ENCODE measurements at regions of chr2 and their contacts with region 1.

Region 1: DNA sequence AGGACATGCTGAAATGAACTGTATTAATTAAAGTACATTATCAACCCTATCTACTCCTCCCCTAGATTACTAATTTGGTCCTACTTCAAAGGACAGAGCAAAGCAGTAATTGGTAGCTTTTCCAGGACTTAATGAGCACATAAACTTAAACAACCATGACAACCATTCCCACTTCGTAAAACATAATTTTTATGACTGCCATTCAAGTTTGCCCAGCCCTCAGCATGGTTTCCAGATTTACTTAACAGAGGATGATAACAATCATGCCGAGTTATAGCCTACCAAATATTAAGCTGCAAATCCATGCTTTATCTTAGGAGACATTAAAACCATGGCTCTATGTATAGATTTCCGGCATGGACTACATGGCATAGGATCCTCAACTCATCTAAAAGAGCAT is 401.1 kb upstream of the CHAC2 start:
- DNase-seq: no peak
- ATAC-seq: no peak
- H3K4me3 ChIP-seq: no peak overlapping the region
- H3K27ac ChIP-seq: no peak overlapping the region
- H3K4me1 ChIP-seq: no peaks in the 10 kb centered on the region
- H3K27me3 ChIP-seq: no peaks in the 10 kb centered on the region
- CTCF ChIP-seq: no peak
- EP300 ChIP-seq: no peak
- POLR2A ChIP-seq: no peak
- RAD21 ChIP-seq: no peak

Region 2: GRCh38 chr2:52775674-52776073 is 590.9 kb before region 1 on chr2:
- CTCF ChIA-PET with region 1: no interaction called
- POLR2A ChIA-PET with region 1: no interaction called
- in situ Hi-C with region 1: no loop called
- intact Hi-C with region 1: no loop called
- DNase-seq: no peak
- ATAC-seq: no peak
- H3K4me3 ChIP-seq: no peak overlapping the region
- H3K27ac ChIP-seq: no peak overlapping the region
- H3K4me1 ChIP-seq: no peaks in the 10 kb centered on the region
- H3K27me3 ChIP-seq: no peaks in the 10 kb centered on the region
- CTCF ChIP-seq: no peak
- EP300 ChIP-seq: no peak
- POLR2A ChIP-seq: no peak
- RAD21 ChIP-seq: no peak

Region 3: DNA sequence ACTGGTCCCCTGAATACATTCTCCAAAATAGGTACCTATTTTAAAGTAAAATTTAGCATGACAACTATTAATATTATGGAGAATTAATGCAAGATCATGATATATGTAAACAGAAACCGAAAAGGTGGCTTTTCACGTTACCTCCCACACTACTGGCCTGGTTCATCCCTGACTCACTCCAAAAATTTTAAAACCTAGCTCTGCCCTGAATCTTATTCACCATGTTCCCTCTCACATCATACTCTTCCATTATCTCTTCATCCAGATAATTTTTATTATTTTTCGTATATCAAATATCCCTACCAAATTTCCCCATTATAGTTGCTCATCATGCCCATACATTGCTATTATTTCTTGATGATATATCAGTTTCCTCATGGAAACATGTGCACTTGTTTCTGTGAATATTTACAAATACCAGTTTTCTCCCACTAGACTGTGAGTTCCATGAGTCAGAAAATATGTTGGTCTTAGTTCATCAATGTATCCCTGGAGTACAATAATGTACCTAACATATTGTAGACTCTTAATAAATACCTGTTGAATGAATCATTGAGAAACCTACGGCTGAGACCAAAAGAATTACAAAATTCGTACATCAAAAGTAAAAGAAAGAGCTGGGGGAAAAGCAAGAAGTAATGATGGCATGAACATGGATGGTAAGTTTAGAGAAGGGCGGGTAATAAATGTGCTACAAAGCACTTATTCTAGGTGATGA is 41.0 kb after region 1 on chr2:
- CTCF ChIA-PET with region 1: no interaction called
- POLR2A ChIA-PET with region 1: no interaction called
- in situ Hi-C with region 1: no loop called
- intact Hi-C with region 1: loop called (anchors 1 kb)
- DNase-seq: no peak
- ATAC-seq: no peak
- H3K4me3 ChIP-seq: no peak overlapping the region
- H3K27ac ChIP-seq: no peak overlapping the region
- H3K4me1 ChIP-seq: no peaks in the 10 kb centered on the region
- H3K27me3 ChIP-seq: no peaks in the 10 kb centered on the region
- CTCF ChIP-seq: no peak
- EP300 ChIP-seq: no peak
- POLR2A ChIP-seq: no peak
- RAD21 ChIP-seq: no peak

Region 4: GRCh38 chr2:53987336-53987921 is 620.9 kb after region 1 on chr2:
- CTCF ChIA-PET with region 1: no interaction called
- POLR2A ChIA-PET with region 1: no interaction called
- in situ Hi-C with region 1: no loop called
- intact Hi-C with region 1: no loop called
- DNase-seq: peak; percentile 51
- ATAC-seq: no peak
- H3K4me3 ChIP-seq: no peak overlapping the region
- H3K27ac ChIP-seq: peak overlapping the region; percentile 1
- H3K4me1 ChIP-seq: peaks cover 46% of the 10 kb centered on the region
- H3K27me3 ChIP-seq: no peaks in the 10 kb centered on the region
- CTCF ChIP-seq: no peak
- EP300 ChIP-seq: peak in 1 of 2 experiments; percentile 26; a peak in 1 of 4 replicates
- POLR2A ChIP-seq: no peak
- RAD21 ChIP-seq: no peak